Dorsolateral prefrontal cortex (tissue), 120 donors: ENCODE measurements at regions of chr11 and their contacts with region 1.

Region 1: GRCh38 chr11:83819933-83820549 is 533.9 kb upstream of the CCDC90B start:
- DNase-seq: peak in 1 of 10 donors; percentile 19
- H3K4me3 ChIP-seq: no peak overlapping the region
- H3K27ac ChIP-seq: peak overlapping the region in 43 of 59 donors; percentile 5 to 78 (median 49)
- H3K27me3 ChIP-seq: no peaks in the 10 kb centered on the region
- CTCF ChIP-seq: peak; percentile 49 to 91 (median 74)

Region 2: GRCh38 chr11:83285771-83286528 is 534.1 kb before region 1 on chr11 and contains the start of gene CCDC90B:
- intact Hi-C with region 1: loop called in 1 of 2 experiments (anchors 5 kb)
- DNase-seq: peak; percentile 94 to 99 (median 97)
- H3K4me3 ChIP-seq: peak within 1 kb of the TSS; percentile 66 to 100 (median 93)
- H3K27ac ChIP-seq: peak within 1 kb of the TSS; percentile 89 to 100 (median 99)
- H3K27me3 ChIP-seq: no peaks in the 10 kb centered on the region
- CTCF ChIP-seq: peak in 46 of 56 donors; percentile 22 to 78 (median 58)
- total RNA-seq, gene CCDC90B: 25.8 to 63.1 (median 35.8) TPM

Region 3: GRCh38 chr11:83292709-83293456 is 527.2 kb before region 1 on chr11:
- intact Hi-C with region 1: loop called (anchors 2 to 5 kb)
- DNase-seq: peak in 3 of 10 donors; percentile 10 to 57 (median 47)
- H3K4me3 ChIP-seq: peak overlapping the region in 55 of 59 donors; percentile 4 to 64 (median 40)
- H3K27ac ChIP-seq: peak overlapping the region in 54 of 59 donors; percentile 13 to 88 (median 68)
- H3K27me3 ChIP-seq: no peaks in the 10 kb centered on the region
- CTCF ChIP-seq: peak; percentile 61 to 93 (median 84)

Region 4: DNA sequence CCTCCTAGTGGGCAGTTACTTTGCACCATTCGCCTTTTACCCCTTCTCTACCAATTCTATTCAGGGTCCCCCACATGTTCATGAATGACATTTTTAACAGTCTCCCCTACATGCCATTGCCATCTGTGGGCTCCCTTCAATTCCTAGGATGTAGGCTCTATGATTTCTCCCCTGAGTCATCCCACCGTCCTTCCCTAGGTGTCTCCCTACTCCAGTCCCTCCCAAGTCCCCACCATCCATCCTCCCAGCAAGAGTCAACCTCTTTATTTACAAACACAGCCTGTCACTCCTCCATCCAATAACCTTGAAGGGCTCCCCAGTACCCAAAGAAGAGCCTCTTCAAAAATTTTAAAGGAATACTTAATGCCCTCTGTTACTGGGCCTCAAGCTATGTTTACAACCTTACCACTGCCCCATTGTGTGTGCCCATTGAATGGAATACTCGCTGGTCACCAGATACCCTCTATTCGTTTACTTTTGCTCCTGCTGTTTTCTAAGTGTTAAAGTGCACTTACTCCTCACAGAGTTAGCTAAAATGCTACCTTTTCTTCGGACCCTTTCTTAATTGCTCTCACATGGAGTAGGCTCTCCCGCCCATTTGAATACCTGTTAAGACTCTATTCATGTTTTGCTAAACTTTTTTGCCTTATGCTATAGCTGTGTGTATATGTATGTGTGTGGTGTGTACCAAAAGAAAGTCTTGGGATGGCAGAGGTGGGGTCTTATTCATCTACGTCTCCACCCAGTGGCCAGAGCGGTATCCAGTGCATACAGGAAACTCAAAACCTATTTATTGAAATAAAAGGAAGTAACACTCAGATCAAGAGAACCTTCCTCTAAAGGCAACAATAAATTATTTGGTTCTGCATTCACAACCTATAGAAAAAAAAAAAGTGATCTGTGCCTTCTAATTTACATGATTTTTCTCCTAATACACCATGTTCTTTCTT is 298.1 kb before region 1 on chr11:
- intact Hi-C with region 1: loop called in 1 of 2 experiments (anchors 2 kb)
- DNase-seq: no peak
- H3K4me3 ChIP-seq: no peak overlapping the region
- H3K27ac ChIP-seq: peak overlapping the region in 13 of 59 donors; percentile 7 to 61 (median 33)
- H3K27me3 ChIP-seq: no peaks in the 10 kb centered on the region
- CTCF ChIP-seq: peak in 39 of 56 donors; percentile 10 to 58 (median 30)

Region 5: GRCh38 chr11:83671289-83671688 is 148.8 kb before region 1 on chr11:
- intact Hi-C with region 1: loop called in 1 of 2 experiments (anchors 5 kb)
- DNase-seq: no peak
- H3K4me3 ChIP-seq: no peak overlapping the region
- H3K27ac ChIP-seq: peak overlapping the region in 6 of 59 donors; percentile 0 to 36 (median 18)
- H3K27me3 ChIP-seq: no peaks in the 10 kb centered on the region
- CTCF ChIP-seq: peak in 47 of 56 donors; percentile 5 to 67 (median 39)

Region 6: GRCh38 chr11:83724008-83724461 is 96.0 kb before region 1 on chr11:
- intact Hi-C with region 1: loop called (anchors 5 to 10 kb)
- DNase-seq: no peak
- H3K4me3 ChIP-seq: peak overlapping the region in 32 of 59 donors; percentile 4 to 51 (median 32)
- H3K27ac ChIP-seq: peak overlapping the region in 45 of 59 donors; percentile 7 to 79 (median 60)
- H3K27me3 ChIP-seq: no peaks in the 10 kb centered on the region
- CTCF ChIP-seq: peak in 33 of 56 donors; percentile 10 to 60 (median 32)